MCF 10A (cell line): ENCODE measurements at regions of chr6 and their contacts with region 1.

Region 1: DNA sequence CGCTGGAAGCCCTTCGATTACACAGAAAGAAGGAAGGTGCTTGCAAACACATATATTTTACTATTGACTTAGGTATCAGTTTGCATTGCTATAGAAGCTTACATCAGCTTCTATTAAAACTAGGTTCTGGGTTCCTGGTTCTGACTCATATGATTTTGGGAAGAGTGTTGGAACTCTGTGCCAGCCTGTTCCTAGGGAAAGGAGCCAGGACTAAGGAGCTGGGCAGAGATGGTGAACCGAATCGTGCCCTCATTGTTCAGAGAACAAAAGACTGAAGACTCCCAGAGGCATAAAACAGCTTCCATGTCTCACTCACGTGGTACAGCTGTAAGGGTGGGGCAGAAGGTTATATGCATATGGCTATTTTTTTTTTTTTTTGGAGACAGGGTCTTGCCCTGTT is 89.0 kb upstream of the THBS2 start:
- DNase-seq: peak; percentile 90
- H3K4me3 Mint-ChIP-seq: no peak overlapping the region
- H3K27ac Mint-ChIP-seq: peak overlapping the region; percentile 6
- H3K4me1 Mint-ChIP-seq: peaks cover 47% of the 10 kb centered on the region
- H3K27me3 Mint-ChIP-seq: no peaks in the 10 kb centered on the region
- CTCF ChIP-seq: no peak

Region 2: DNA sequence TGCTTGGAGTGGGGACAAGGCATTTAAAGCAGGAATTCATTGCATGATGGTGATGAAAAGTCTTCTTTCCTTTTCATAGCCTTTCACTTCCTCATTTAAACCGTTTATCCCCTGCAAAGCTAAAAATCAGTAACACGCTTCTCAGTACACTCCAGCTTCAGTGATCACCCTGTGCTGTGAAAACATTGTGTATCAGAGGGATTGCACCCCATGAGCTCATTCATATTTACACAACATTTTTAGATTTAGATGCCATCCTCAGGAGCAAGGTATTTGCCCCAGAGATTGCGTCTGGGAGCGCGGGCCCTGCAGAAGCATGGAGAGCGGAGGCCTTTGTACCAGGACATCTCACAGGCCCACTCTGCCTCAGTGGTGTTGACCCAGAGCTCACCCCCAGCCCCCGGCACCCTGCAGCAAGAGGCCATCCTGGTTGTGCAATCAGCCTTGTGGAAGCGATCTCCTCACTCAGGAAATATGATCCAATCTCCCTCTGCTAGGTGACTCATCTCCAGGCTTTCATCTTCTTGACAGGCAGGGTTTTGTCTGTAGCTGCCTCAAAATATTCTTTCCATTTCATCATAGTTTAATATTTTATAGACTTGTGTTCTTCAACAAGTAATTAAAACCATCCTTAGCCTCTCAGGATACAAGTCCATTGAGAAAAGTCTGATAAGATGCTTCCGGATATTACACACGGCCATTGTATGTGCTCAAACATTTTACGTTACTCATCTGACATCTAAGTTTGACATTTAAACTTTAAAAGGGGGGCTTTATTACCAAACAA is 50.1 kb before region 1 on chr6:
- CTCF ChIA-PET with region 1: no interaction called
- POLR2A ChIA-PET with region 1: interaction called, 11 read pairs
- intact Hi-C with region 1: no loop called
- DNase-seq: peak; percentile 93
- H3K4me3 Mint-ChIP-seq: peak overlapping the region; percentile 25
- H3K27ac Mint-ChIP-seq: peak overlapping the region; percentile 6
- H3K4me1 Mint-ChIP-seq: peaks cover 55% of the 10 kb centered on the region
- H3K27me3 Mint-ChIP-seq: no peaks in the 10 kb centered on the region
- CTCF ChIP-seq: no peak